Right ventricle myocardium inferior (tissue), 1 donor: ENCODE measurements at regions of chr18 and their contacts with region 1.

Region 1: GRCh38 chr18:36402765-36403396 is 105.4 kb downstream of the FHOD3 start:
- DNase-seq: peak; percentile 81
- ATAC-seq: peak; percentile 52

Region 2: DNA sequence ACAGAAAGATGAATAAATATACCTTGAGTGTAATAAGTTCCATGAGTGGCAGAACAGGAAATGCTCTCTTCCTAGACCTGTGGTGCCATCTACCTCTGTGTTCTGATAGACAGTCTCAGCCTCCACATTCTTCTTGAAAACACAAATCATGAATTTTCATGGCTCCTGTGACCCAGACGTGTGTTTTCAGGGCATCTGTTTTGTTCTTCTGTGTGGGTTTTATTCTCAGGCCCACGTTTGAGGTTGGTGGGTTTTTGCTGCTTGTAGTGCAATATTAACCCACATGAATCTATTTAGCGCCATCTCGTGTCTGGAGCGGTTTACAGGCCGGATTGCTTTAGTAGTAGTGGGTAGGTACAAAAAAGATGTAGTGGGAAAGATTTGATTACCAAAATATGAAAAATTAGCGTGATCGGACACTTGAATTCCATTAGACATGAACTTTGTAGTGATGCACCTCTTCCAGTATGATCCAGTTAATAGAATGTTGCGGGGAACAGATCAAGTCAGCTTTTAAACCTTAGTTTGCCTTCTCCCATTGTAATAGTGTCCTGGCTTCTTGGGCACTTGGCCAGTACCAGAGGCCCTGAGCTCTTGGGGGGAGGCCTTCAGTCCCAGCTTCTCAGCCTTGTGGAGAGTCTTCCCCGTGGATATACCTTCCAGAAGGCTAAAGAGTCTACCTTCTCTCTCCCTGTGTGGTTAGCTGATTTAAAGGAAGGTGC is 169.4 kb after region 1 on chr18:
- intact Hi-C with region 1: loop called (anchors 10 kb)
- DNase-seq: no peak
- ATAC-seq: peak; percentile 58